H1 (cell line): ENCODE measurements at regions of chr22 and their contacts with region 1.

Region 1: GRCh38 chr22:42880815-42881214 is 23.7 kb upstream of the ARFGAP3 start:
- DNase-seq: no peak
- H3K4me3 ChIP-seq: no peak overlapping the region
- H3K27ac ChIP-seq: no peak overlapping the region
- H3K4me1 ChIP-seq: peaks cover 0 to 7% (median 4%) of the 10 kb centered on the region in 4 experiments; a peak in 6 of 7 replicates
- H3K27me3 ChIP-seq: no peaks in the 10 kb centered on the region
- CTCF ChIP-seq: peak; percentile 50 to 72 (median 66)
- EP300 ChIP-seq: no peak
- POLR2A ChIP-seq: no peak
- RAD21 ChIP-seq: peak; percentile 35 to 52

Region 2: DNA sequence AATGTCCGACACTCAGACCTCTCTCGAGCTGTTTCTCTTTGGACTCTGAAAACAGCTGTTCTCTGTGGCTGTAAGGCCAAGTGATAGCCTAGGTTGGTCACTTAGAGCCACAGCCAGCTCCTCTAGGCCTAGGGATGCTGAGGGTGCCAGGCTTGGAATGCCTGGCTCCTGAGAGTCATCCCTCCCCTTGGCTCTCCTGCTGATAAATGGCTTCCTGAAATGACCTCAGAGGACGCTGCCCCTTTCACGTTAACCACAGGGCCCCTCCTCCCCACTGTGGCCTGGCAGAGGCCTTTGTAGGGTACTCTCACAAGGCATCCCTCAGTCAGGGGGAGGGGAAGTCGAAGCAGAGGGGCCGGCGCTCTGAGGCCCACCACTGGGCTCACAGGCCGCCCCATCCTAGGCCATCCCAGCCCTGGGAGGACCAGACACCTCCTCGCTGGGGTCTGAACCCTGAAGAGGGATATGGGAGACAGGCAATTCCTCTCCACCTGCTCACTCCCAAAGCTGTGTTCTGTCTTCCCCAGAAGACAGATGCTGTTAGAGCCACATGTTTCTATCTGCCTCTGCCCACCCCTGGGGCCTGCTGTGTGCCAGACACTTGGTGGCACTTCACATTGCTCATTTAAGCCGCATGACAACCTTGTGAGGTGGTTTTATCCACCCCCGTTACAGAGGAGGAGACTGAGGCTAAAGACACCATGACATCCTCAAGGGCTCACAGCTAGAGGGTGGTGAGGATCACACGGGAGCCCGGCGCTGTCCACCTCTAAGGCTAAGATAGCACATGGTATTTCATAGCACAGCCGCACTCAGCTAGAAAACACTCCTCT is 74.6 kb before region 1 on chr22:
- CTCF ChIA-PET with region 1: no interaction called
- POLR2A ChIA-PET with region 1: no interaction called
- DNase-seq: peak in 1 of 2 experiments; percentile 47
- H3K4me3 ChIP-seq: no peak overlapping the region
- H3K27ac ChIP-seq: no peak overlapping the region
- H3K4me1 ChIP-seq: peaks cover 0 to 10% (median 8%) of the 10 kb centered on the region in 4 experiments; a peak in 6 of 7 replicates
- H3K27me3 ChIP-seq: no peaks in the 10 kb centered on the region
- CTCF ChIP-seq: no peak
- EP300 ChIP-seq: no peak
- POLR2A ChIP-seq: no peak
- RAD21 ChIP-seq: no peak

Region 3: DNA sequence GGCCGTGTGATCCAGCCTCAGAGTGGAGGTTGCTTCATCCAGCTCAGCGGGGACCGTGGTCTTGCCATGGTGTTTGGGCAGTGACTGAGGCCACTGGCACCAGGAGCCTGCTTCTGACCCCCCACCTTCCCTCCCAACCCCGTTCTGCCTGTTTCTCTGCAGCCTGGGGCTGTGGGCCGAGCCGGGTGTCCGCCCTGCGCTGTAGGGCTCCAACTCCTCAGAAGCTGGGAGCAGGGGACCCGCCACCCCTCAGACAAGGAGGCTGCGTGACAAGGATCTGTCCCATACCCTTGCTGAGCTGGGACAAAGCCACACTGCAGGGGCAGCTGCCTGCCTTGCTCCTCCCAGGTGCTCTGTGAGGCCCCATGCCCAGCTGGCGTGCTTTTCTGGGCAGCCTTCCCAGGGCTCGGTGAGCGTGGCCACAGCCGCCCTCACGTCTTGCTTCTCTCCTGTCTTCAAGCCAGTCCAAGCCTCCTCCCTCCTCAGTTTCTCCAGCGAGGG is 12.0 kb before region 1 on chr22:
- CTCF ChIA-PET with region 1: interaction called, 22 read pairs
- POLR2A ChIA-PET with region 1: interaction called, 6 read pairs
- DNase-seq: no peak
- H3K4me3 ChIP-seq: no peak overlapping the region
- H3K27ac ChIP-seq: no peak overlapping the region
- H3K4me1 ChIP-seq: no peaks in the 10 kb centered on the region
- H3K27me3 ChIP-seq: no peaks in the 10 kb centered on the region
- CTCF ChIP-seq: no peak
- EP300 ChIP-seq: no peak
- POLR2A ChIP-seq: no peak
- RAD21 ChIP-seq: no peak

Region 4: DNA sequence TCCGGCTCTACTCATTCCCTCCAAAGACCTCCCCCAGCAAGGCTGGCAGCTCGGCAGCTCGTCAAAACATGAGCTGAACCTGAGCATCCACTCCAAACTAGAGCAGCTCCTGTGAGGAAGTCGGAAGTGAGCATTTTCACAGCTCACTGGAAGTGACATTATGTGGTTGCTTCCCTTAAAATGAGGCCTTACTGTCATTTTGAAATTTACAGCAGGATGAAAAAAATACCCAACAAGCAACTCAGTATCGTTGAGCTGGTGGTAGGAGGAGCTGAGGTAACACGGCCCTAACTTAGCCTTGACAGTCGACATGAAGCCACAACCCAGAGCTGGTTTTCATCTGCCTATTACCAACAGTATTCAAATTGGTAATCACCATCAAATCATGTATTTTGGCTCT is 14.3 kb after region 1 on chr22:
- CTCF ChIA-PET with region 1: interaction called, 20 read pairs
- POLR2A ChIA-PET with region 1: no interaction called
- DNase-seq: no peak
- H3K4me3 ChIP-seq: no peak overlapping the region
- H3K27ac ChIP-seq: no peak overlapping the region
- H3K4me1 ChIP-seq: no peaks in the 10 kb centered on the region; a peak in 1 of 7 replicates
- H3K27me3 ChIP-seq: no peaks in the 10 kb centered on the region
- CTCF ChIP-seq: no peak
- EP300 ChIP-seq: no peak
- POLR2A ChIP-seq: no peak
- RAD21 ChIP-seq: no peak

Region 5: DNA sequence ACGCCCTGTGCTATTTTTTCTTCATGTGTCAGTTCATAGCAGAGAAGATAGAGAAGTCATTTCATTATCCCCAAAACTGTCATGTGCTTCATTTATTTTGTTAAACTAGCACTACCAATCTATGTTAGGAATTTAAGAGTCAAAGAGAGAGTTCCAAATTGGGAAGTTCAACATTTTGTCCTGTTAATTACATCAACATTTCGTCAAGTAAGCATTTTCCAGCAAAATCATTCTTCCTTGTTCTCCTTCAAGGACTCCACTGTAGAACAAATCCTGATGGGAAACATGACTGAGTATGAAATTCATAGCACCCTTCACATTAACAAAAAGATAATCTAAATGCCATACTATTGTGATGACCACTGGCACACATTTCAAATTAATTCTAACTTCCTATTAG is 75.0 kb after region 1 on chr22:
- CTCF ChIA-PET with region 1: no interaction called
- POLR2A ChIA-PET with region 1: no interaction called
- DNase-seq: no peak
- H3K4me3 ChIP-seq: no peak overlapping the region
- H3K27ac ChIP-seq: no peak overlapping the region
- H3K4me1 ChIP-seq: peaks cover 3 to 24% (median 14%) of the 10 kb centered on the region in 4 experiments
- H3K27me3 ChIP-seq: no peaks in the 10 kb centered on the region
- CTCF ChIP-seq: no peak
- EP300 ChIP-seq: no peak
- POLR2A ChIP-seq: no peak
- RAD21 ChIP-seq: no peak